Activated CD4-positive, alpha-beta T cell treated with anti-CD3 and anti-CD28 coated beads, Interleukin-2, amount 10 ng/mL, durations not matched to agents 24 days and 14 days (primary cell): ENCODE measurements at regions of chr16 and their contacts with region 1.

Region 1: GRCh38 chr16:67349172-67349571 is 22.6 kb downstream of the LRRC36 start:
- DNase-seq: no peak
- H3K4me3 Mint-ChIP-seq: no peak overlapping the region
- H3K27ac Mint-ChIP-seq: no peak overlapping the region
- H3K4me1 Mint-ChIP-seq: no peaks in the 10 kb centered on the region
- H3K27me3 Mint-ChIP-seq: peaks cover 18% of the 10 kb centered on the region

Region 2: GRCh38 chr16:67279296-67280089 is 69.7 kb before region 1 on chr16 and contains the start of gene PLEKHG4:
- intact Hi-C with region 1: loop called (anchors 5 kb)
- DNase-seq: peak; percentile 95
- H3K4me3 Mint-ChIP-seq: peak within 1 kb of the TSS; percentile 89
- H3K27ac Mint-ChIP-seq: peak within 1 kb of the TSS; percentile 90
- H3K4me1 Mint-ChIP-seq: peaks cover 18% of the 10 kb centered on the region
- H3K27me3 Mint-ChIP-seq: no peaks in the 10 kb centered on the region
- total RNA-seq, gene PLEKHG4: 43.4 and 43.8 TPM in 2 replicates

Region 3: GRCh38 chr16:67311607-67312488 is 37.3 kb before region 1 on chr16:
- intact Hi-C with region 1: no loop called
- DNase-seq: peak; percentile 91
- H3K4me3 Mint-ChIP-seq: peak overlapping the region; percentile 41
- H3K27ac Mint-ChIP-seq: peak overlapping the region; percentile 96
- H3K4me1 Mint-ChIP-seq: peaks cover 39% of the 10 kb centered on the region
- H3K27me3 Mint-ChIP-seq: no peaks in the 10 kb centered on the region

Region 4: DNA sequence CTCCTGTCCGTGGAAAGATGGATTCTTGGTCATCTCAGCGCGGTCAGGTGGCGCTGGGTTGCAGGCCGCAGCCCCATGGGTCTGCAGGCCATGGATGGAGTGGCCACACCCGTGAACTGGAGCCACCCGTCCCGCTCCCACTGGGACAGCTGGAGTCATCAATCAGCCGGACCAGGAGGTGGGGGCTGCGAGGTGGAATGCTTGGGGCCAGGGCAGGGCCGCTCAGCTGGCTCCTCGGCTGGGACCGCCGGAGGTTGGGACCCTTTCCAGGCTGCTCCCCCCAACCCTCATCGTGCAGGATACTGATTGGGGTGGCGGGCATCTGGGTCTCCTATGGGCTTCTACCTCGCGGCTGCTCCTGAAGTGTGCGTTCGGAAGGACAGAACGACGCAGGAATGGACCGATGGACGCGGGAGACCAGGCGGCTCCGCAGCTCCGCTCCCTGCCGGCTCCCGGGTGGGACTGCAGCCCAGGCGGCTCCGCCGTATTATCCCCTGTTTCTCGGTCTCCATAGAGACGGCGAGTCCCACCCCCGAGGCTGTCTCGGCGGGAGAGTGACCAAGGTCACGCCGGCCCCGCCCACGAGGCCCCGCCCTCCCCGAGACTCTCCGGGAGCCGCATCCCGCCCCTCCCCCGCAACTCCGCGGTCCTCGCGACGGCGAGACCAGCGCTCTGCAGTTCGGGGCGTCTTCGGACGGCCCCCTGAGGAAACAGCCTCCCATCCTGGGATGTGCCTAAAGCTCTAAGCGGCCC is 44.0 kb after region 1 on chr16 and contains the start of gene TPPP3:
- intact Hi-C with region 1: loop called (anchors 10 kb)
- DNase-seq: peak; percentile 84
- H3K4me3 Mint-ChIP-seq: peak within 1 kb of the TSS; percentile 64
- H3K27ac Mint-ChIP-seq: peak within 1 kb of the TSS; percentile 62
- H3K4me1 Mint-ChIP-seq: peaks cover 4% of the 10 kb centered on the region
- H3K27me3 Mint-ChIP-seq: peaks cover 49% of the 10 kb centered on the region
- total RNA-seq, gene TPPP3: not detected in 2 replicates